A673 (cell line): ENCODE measurements at regions of chr1 and their contacts with region 1.

Region 1: DNA sequence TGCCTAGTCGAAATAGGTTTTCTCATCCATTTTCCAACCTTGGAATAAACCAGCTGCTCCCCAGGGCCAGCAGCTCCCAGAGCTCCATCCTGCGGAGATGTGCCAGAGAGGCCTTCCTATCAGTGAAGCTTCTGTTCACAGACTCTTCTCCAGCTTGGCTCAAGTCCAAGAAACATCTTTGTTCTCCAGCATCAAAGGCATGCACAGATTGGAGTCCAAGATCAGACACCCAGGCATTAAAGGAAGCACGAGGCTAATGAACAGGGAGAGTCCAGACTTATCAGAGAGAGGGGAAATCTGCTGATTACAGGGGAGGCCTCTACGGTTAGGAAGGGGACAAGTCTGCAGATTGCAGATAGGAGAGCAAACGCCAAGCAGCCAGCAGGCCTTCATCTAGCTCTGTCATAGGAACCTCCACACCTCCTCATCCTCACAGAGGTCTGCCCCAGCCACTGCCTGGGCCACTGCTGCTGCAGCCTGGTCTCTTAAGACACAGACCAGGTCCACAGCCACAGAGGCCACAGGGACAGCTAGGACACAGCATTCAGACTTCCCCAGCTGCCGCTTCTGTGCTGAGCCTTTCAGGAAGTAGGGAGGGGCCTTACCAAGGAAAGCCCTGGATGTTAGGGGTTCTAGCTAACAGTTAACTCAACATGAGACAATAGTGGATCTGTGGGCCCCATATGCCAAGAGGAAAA is 3.4 kb downstream of the PRR9 start:
- DNase-seq: peak; percentile 18
- H3K4me3 ChIP-seq: no peak overlapping the region
- H3K27ac ChIP-seq: no peak overlapping the region
- H3K4me1 ChIP-seq: no peaks in the 10 kb centered on the region
- H3K27me3 ChIP-seq: no peaks in the 10 kb centered on the region
- CTCF ChIP-seq: no peak

Region 2: GRCh38 chr1:152654110-152654509 is 566.6 kb before region 1 on chr1:
- CTCF ChIA-PET with region 1: no interaction called
- POLR2A ChIA-PET with region 1: no interaction called
- intact Hi-C with region 1: loop called (anchors 5 kb)
- DNase-seq: peak; percentile 76
- H3K4me3 ChIP-seq: no peak overlapping the region
- H3K27ac ChIP-seq: no peak overlapping the region
- H3K4me1 ChIP-seq: no peaks in the 10 kb centered on the region
- H3K27me3 ChIP-seq: peaks cover 11% of the 10 kb centered on the region
- CTCF ChIP-seq: peak; percentile 91

Region 3: DNA sequence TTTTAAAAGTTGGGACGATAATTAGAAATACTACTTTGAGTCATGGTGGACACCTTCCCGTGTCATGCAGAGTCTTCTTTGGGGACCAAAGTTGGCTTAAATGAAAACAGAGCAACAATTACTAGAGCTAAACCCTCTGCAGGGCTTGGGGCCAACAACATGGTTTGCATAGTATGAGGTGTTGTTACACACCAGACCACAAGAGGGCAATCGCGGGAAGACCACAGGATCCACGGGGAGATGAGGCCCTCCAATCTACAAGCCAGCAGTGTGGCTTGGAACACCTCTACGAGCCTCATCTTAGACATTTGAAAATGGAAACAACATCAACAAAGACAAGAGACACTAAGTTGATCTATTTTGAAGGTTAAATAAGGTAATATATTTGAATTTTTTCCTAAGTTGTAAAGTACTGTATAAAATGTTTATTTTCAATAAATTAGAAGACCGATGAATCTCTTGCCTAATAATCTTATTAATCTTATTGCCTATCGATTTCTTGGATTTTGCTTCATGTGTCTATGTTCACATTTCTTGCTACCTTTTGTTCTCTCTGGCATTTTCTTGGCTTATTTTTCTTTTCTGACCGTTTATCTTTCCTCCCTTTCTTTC is 350.8 kb before region 1 on chr1:
- CTCF ChIA-PET with region 1: no interaction called
- POLR2A ChIA-PET with region 1: no interaction called
- intact Hi-C with region 1: loop called (anchors 5 kb)
- DNase-seq: peak; percentile 80
- H3K4me3 ChIP-seq: no peak overlapping the region
- H3K27ac ChIP-seq: no peak overlapping the region
- H3K4me1 ChIP-seq: no peaks in the 10 kb centered on the region
- H3K27me3 ChIP-seq: peaks cover 6% of the 10 kb centered on the region
- CTCF ChIP-seq: peak; percentile 76

Region 4: GRCh38 chr1:152917794-152918193 is 303.0 kb before region 1 on chr1:
- CTCF ChIA-PET with region 1: no interaction called
- POLR2A ChIA-PET with region 1: no interaction called
- intact Hi-C with region 1: loop called (anchors 10 kb)
- DNase-seq: peak; percentile 29
- H3K4me3 ChIP-seq: no peak overlapping the region
- H3K27ac ChIP-seq: no peak overlapping the region
- H3K4me1 ChIP-seq: no peaks in the 10 kb centered on the region
- H3K27me3 ChIP-seq: peaks cover 45% of the 10 kb centered on the region
- CTCF ChIP-seq: peak; percentile 40

Region 5: GRCh38 chr1:153001382-153001781 is 219.4 kb before region 1 on chr1 and contains the start of gene SPRR3:
- CTCF ChIA-PET with region 1: no interaction called
- POLR2A ChIA-PET with region 1: no interaction called
- intact Hi-C with region 1: no loop called
- DNase-seq: no peak
- H3K4me3 ChIP-seq: no peak within 1 kb of the TSS
- H3K27ac ChIP-seq: no peak within 1 kb of the TSS
- H3K4me1 ChIP-seq: no peaks in the 10 kb centered on the region
- H3K27me3 ChIP-seq: no peaks in the 10 kb centered on the region
- CTCF ChIP-seq: no peak
- total RNA-seq, gene SPRR3: not detected in 2 replicates